Left lung (tissue), 14 donors: ENCODE measurements at regions of chr10 and their contacts with region 1.

Region 1: DNA sequence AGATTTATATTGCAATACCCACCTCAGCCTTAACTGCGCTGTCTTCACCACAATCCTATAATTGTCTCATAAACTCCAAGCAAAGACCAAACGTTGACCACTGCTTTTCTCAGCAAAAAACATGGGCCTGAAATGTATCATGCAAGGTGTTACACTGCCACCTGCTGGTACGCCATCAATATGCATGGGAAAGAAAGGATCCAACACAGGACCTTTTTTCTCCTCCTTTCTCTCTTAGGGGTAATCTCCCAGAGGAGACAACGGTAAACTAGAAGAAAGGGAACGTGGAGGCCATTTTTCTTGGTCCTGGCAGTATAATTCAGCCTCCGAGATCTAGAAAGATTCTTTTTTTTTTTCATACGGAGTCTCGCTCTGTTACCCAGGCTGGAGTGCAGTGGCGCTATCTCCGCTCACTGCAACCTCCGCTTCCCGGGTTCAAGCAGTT is 79.1 kb upstream of the MPP7 start:
- DNase-seq: peak in 3 of 4 donors; percentile 74 to 89 (median 79)
- ATAC-seq: peak; percentile 96
- H3K4me3 ChIP-seq: no peak overlapping the region
- H3K27ac ChIP-seq: peak overlapping the region in 1 of 2 donors; percentile 63
- H3K4me1 ChIP-seq: peaks cover 0 to 35% of the 10 kb centered on the region in 2 donors
- H3K27me3 ChIP-seq: peaks cover 0 to 15% of the 10 kb centered on the region in 2 donors
- CTCF ChIP-seq: peak; percentile 90 to 91

Region 2: DNA sequence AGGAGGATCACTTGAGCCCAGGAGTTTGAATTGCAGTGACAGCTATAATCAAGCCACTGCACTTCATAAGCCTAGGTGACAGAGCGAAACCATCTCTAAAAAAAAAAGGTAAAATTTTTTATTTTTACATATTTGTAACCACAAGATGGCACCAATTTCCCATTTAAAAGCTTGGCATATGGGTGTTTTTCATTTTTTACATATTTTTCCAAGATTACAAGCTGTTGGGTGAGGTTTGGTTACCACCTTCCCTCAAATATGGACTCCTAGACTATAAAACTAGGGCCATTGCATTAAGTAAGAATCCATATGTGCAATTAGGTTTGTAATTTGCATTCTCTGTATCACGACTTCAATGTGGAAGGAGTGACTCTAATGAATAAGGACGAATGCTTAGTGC is 1012.0 kb before region 1 on chr10:
- intact Hi-C with region 1: loop called in 1 of 2 experiments (anchors 10 kb)
- DNase-seq: peak in 1 of 4 donors; percentile 4
- ATAC-seq: no peak
- H3K4me3 ChIP-seq: no peak overlapping the region
- H3K27ac ChIP-seq: no peak overlapping the region
- H3K4me1 ChIP-seq: no peaks in the 10 kb centered on the region
- H3K27me3 ChIP-seq: no peaks in the 10 kb centered on the region
- CTCF ChIP-seq: no peak

Region 3: GRCh38 chr10:28248092-28248491 is 133.8 kb before region 1 on chr10:
- intact Hi-C with region 1: loop called in 1 of 2 experiments (anchors 5 kb)
- DNase-seq: peak in 1 of 4 donors; percentile 47
- ATAC-seq: peak; percentile 65
- H3K4me3 ChIP-seq: no peak overlapping the region
- H3K27ac ChIP-seq: peak overlapping the region in 1 of 2 donors; percentile 49
- H3K4me1 ChIP-seq: peaks cover 5 to 35% of the 10 kb centered on the region in 2 donors
- H3K27me3 ChIP-seq: peaks cover 0 to 4% of the 10 kb centered on the region in 2 donors
- CTCF ChIP-seq: no peak